ENCODE measurements at regions of chr17 and their contacts with region 1.

Region 1: DNA sequence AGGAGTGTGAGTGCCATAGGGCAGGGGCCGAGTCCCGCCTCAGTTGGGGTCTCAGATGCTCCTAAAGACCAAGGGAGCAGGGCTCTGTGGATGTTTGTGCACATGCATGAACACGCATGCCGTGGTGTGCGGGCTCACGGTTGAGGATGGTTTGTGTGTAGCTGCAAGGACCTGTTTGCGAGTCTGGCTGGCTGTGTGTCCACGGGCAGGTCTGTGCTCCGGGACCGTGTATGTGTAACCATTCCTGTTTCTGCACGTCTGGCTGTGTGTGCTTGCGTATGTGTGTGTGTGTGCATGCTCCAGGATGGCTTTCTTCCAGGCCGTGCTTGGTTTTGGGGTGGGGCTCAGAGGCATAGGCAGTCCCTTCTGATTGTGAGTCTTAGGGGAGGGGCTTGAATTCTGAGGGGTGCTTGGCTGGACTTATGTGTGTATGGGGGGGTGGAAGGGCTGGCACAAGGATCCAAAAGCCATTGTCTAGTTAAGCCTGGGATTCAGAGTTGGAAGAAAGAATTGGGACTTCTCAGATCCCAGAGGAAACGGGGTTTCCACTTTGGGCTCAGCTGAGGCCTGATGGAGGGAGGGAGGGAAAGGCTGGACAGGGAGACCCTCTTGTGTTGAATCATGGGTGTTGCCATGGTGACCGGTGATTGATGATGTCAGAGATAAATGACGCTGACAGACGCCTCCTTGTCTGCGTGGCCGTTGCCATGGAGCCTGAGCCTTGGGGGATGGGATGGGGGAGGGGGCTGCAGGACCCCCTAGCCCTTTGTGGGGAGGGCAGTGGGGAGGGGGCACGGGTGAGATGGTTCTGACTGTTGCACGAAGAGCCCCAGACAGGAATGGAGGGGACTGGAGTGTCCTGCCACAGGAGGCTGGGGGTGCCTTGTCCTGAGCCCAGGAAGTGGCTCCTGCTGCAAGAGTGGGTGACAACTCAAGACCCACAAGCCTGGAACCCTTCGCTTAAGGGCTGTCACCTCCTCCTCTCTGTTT is 14.3 kb downstream of the GJD3 start:
- DNase-seq: no peak
- ATAC-seq: no peak

Region 2: DNA sequence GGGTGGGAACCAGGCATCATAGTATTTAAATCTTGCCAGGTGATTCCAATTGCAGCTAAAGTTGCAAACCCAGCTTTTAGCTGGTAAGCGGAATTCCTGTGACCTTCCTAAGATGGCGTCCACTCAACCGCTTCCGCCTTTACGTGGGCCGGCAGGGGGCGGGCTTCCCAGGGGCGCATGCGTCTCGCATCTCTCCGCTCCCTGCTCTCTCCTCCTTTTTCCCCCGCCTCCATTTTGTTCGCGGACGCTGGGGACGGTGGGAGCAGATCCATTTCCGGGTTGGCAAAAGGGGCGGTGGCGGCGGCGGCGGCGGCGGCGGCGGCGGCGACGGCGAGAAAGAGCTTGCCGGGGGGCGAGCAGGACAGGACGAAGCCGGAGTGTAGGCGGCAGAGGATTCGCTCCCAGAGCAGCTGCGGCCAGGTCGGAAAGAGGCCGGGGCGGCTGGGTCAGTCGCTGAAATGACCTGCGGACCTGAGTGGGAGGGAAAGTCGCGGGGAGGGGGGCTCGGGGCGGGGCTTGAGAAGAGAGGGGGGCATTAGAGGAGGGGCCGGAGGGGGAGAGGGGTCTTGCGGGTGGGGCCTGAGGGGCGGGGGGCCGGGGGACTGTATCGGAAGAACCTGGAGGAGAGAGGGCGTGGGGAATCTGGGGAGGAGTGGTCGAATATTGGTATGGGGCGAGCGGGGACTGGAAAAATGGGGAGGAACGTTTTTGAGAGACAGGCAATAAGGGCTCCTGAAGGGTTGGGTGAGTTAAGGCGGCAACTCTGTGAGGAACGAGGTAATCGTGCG is 130.9 kb before region 1 on chr17 and contains the start of gene WIPF2:
- intact Hi-C with region 1: loop called (anchors 5 kb)
- DNase-seq: peak; percentile 97
- ATAC-seq: peak; percentile 99
- total RNA-seq, gene WIPF2: 12.3 TPM

Region 3: DNA sequence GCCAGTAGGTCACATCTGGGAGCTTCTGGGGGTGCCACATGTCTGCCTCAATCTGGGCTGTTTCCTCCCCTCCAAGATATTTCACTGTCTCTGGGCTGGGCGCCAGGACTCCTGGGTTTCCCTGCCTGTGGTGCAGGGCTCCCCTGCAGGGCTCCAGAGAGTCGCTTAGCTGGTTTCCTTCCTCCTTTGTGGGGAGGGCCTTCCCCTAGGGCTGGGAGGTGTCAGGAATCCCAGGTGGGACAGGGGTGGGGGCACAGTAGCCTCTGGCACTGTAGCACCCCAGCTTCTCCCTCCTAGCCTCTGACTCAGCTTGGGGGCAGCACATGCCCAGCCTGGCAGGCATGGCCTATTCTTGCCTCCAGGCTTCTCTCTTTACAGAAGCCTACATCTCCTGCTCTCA is 38.6 kb before region 1 on chr17:
- intact Hi-C with region 1: loop called (anchors 2 kb)
- DNase-seq: peak; percentile 85
- ATAC-seq: peak; percentile 17

Region 4: GRCh38 chr17:40331743-40332641 is 18.2 kb before region 1 on chr17:
- intact Hi-C with region 1: loop called (anchors 2 kb)
- DNase-seq: peak; percentile 95
- ATAC-seq: peak; percentile 92

Region 5: GRCh38 chr17:40791787-40792436 is 441.7 kb after region 1 on chr17:
- intact Hi-C with region 1: no loop called
- DNase-seq: no peak
- ATAC-seq: peak; percentile 73

Measured in Right ventricle myocardium inferior (tissue), 1 donor.